ENCODE measurements at regions of chr2 and their contacts with region 1.

Region 1: DNA sequence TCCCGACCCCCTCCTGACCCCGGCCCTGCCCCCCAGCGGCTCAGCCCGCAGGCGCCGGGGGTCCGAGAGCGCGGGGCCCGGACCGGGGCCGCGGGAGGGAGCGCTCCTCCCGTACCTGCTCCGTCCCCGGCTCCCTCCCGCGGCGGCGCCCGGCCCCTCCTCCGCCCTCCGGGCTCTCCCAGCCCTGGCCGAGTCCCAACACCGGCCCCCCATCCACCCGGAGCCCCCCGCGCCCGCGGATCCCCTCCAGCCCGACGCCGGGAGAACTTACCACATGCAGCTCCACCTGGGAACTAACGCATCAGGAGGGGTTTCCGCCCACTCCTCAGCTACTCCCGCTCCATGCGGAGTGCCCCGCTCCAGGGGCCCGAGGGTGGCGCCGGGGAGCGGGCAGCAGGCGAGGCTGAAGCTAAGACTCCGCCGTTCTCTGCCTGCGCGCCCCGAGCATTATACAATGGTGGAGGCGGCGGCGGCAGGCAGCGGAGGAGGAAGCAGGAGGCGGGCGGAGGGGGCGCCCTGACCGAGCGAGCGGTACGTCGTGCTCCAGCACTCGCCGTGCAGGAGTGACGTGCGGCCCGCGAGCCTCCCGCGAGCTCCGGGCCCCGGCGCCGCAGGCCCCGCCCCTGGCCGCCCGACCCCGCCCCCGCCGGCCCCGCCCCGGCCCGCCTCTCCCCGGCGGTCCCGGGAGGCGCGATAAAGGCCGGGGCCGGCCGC is at the start of gene SERTAD2:
- DNase-seq: peak; percentile 72 to 95 (median 87)
- ATAC-seq: peak; percentile 82
- H3K4me3 ChIP-seq: peak within 1 kb of the TSS; percentile 84 to 85
- H3K4me3 Mint-ChIP-seq: peak within 1 kb of the TSS; percentile 94
- H3K27ac ChIP-seq: peak within 1 kb of the TSS; percentile 86 to 90
- H3K27ac Mint-ChIP-seq: peak within 1 kb of the TSS; percentile 97
- H3K4me1 ChIP-seq: peaks cover 63% of the 10 kb centered on the region
- H3K4me1 Mint-ChIP-seq: peaks cover 78% of the 10 kb centered on the region
- H3K27me3 ChIP-seq: no peaks in the 10 kb centered on the region
- H3K27me3 Mint-ChIP-seq: no peaks in the 10 kb centered on the region
- CTCF ChIP-seq: no peak
- total RNA-seq, gene SERTAD2: 47.5 to 48.8 TPM

Region 2: GRCh38 chr2:64488050-64488974 is 165.2 kb before region 1 on chr2:
- CTCF ChIA-PET with region 1: no interaction called
- POLR2A ChIA-PET with region 1: no interaction called
- intact Hi-C with region 1: no loop called
- DNase-seq: peak; percentile 56 to 87 (median 79)
- ATAC-seq: peak; percentile 82
- H3K4me3 ChIP-seq: no peak overlapping the region
- H3K4me3 Mint-ChIP-seq: no peak overlapping the region
- H3K27ac ChIP-seq: no peak overlapping the region
- H3K27ac Mint-ChIP-seq: no peak overlapping the region
- H3K4me1 ChIP-seq: no peaks in the 10 kb centered on the region
- H3K4me1 Mint-ChIP-seq: peaks cover 11% of the 10 kb centered on the region
- H3K27me3 ChIP-seq: no peaks in the 10 kb centered on the region
- H3K27me3 Mint-ChIP-seq: peaks cover 6% of the 10 kb centered on the region
- CTCF ChIP-seq: peak; percentile 97

Region 3: GRCh38 chr2:64514008-64514407 is 139.5 kb before region 1 on chr2:
- CTCF ChIA-PET with region 1: no interaction called
- POLR2A ChIA-PET with region 1: no interaction called
- intact Hi-C with region 1: no loop called
- DNase-seq: no peak
- ATAC-seq: no peak
- H3K4me3 ChIP-seq: no peak overlapping the region
- H3K4me3 Mint-ChIP-seq: no peak overlapping the region
- H3K27ac ChIP-seq: no peak overlapping the region
- H3K27ac Mint-ChIP-seq: no peak overlapping the region
- H3K4me1 ChIP-seq: no peaks in the 10 kb centered on the region
- H3K4me1 Mint-ChIP-seq: no peaks in the 10 kb centered on the region
- H3K27me3 ChIP-seq: no peaks in the 10 kb centered on the region
- H3K27me3 Mint-ChIP-seq: no peaks in the 10 kb centered on the region
- CTCF ChIP-seq: no peak

Region 4: DNA sequence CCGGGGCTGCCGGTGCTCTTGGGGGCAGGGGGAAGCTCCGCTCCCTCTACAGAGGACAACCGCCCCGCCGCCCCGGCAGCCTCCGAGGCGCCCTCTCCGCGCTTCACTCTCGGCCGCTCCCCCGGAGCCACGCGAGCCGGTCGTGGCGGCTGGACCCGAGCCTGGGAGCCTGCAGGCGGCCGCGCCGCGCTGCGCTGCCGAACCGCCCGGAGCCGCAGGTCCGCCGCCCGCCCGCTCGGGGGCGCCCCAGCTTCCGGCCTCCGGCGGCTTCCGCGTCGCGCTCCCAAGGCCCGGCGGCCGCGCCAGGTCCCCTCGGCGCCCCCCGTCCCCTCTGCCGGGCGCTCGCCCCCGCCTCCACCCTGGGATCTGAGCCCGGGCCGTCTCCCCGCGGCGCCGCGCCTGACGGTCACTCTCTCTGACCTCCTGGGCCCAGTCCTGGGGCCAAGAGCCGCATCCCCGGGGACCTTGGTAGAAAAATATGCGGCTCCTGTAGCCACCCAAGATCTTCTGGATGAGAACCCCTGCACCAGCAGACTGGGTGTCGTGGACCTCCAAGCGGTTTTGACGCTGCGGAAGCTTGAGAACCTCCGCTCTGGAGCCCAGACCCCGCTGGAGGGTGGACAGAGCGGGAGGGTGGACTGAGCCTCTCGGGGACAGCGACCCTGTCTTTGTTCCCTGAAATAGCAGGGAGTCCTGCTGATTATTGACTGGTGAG is 44.1 kb before region 1 on chr2:
- CTCF ChIA-PET with region 1: interaction called, 39 read pairs
- POLR2A ChIA-PET with region 1: interaction called, 31 read pairs
- intact Hi-C with region 1: loop called in 1 of 2 experiments (anchors 2 kb)
- DNase-seq: peak; percentile 37 to 85 (median 66)
- ATAC-seq: peak; percentile 65
- H3K4me3 ChIP-seq: peak overlapping the region; percentile 56 to 63
- H3K4me3 Mint-ChIP-seq: peak overlapping the region; percentile 79
- H3K27ac ChIP-seq: peak overlapping the region in 1 of 2 experiments; percentile 49
- H3K27ac Mint-ChIP-seq: peak overlapping the region; percentile 66
- H3K4me1 ChIP-seq: peaks cover 26% of the 10 kb centered on the region
- H3K4me1 Mint-ChIP-seq: peaks cover 29% of the 10 kb centered on the region
- H3K27me3 ChIP-seq: no peaks in the 10 kb centered on the region
- H3K27me3 Mint-ChIP-seq: no peaks in the 10 kb centered on the region
- CTCF ChIP-seq: peak; percentile 23

Region 5: GRCh38 chr2:64730551-64731262 is 77.2 kb after region 1 on chr2:
- CTCF ChIA-PET with region 1: interaction called, 18 read pairs
- POLR2A ChIA-PET with region 1: interaction called, 47 read pairs
- intact Hi-C with region 1: loop called (anchors 2 to 5 kb)
- DNase-seq: peak in 8 of 9 experiments; percentile 29 to 83 (median 58)
- ATAC-seq: peak; percentile 75
- H3K4me3 ChIP-seq: peak overlapping the region; percentile 32 to 51
- H3K4me3 Mint-ChIP-seq: peak overlapping the region; percentile 87
- H3K27ac ChIP-seq: peak overlapping the region; percentile 69 to 78
- H3K27ac Mint-ChIP-seq: peak overlapping the region; percentile 99
- H3K4me1 ChIP-seq: peaks cover 43% of the 10 kb centered on the region
- H3K4me1 Mint-ChIP-seq: peaks cover 61% of the 10 kb centered on the region
- H3K27me3 ChIP-seq: no peaks in the 10 kb centered on the region
- H3K27me3 Mint-ChIP-seq: no peaks in the 10 kb centered on the region
- CTCF ChIP-seq: no peak

Region 6: DNA sequence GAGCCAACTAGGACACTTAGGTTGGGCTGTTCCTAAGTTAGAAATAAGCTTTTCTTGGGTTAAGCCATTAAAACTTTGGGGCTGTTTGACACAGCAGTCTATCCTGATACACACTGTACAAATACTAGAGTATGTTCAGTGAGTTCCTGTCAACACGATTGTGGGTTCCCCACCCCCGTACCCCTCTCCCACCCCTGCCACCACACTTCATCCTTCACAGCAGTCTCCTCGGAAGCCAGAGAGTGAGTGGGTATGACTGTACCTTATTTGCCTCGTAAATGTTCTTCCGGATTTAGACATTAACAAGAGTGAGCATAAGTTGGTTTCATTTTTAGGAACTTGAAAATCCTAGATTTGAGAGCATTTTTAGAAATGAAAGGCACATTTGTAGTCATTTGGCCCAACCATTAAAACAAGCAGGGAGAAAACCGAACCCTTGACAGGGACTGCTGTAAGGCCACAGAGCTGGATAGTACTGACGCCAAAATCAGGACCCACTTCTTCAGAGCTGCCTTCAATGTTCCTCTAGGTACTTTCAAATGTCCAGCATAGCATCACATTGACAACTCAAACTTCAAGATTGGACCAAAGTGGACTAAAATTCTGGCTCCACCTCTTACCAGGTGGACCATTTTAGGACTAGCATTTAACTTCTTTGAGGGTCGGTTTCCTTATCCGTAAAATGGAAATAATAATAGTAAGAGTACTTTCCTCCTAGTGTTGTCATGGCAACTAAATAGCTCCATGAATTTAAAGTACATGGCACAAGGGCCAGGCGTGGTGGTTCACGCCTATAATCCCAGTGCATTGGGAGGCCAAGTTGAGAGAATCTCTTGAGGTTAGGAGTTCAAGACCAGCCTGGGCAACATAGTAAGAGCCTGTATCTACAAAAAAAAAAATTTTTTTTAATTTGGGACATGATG is 166.5 kb after region 1 on chr2:
- CTCF ChIA-PET with region 1: interaction called, 5 read pairs
- POLR2A ChIA-PET with region 1: interaction called, 25 read pairs
- intact Hi-C with region 1: no loop called
- DNase-seq: peak in 8 of 9 experiments; percentile 39 to 82 (median 56)
- ATAC-seq: peak; percentile 98
- H3K4me3 ChIP-seq: peak overlapping the region; percentile 12 to 36
- H3K4me3 Mint-ChIP-seq: peak overlapping the region; percentile 73
- H3K27ac ChIP-seq: peak overlapping the region; percentile 60 to 72
- H3K27ac Mint-ChIP-seq: peak overlapping the region; percentile 93
- H3K4me1 ChIP-seq: peaks cover 28% of the 10 kb centered on the region
- H3K4me1 Mint-ChIP-seq: peaks cover 40% of the 10 kb centered on the region
- H3K27me3 ChIP-seq: no peaks in the 10 kb centered on the region
- H3K27me3 Mint-ChIP-seq: no peaks in the 10 kb centered on the region
- CTCF ChIP-seq: no peak

Region 7: GRCh38 chr2:65056215-65057053 is 402.9 kb after region 1 on chr2 and contains the start of gene CEP68:
- CTCF ChIA-PET with region 1: no interaction called
- POLR2A ChIA-PET with region 1: interaction called, 3 read pairs
- intact Hi-C with region 1: loop called in 1 of 2 experiments (anchors 5 kb)
- DNase-seq: peak; percentile 89 to 98 (median 96)
- ATAC-seq: peak; percentile 89
- H3K4me3 ChIP-seq: peak within 1 kb of the TSS; percentile 85 to 86
- H3K4me3 Mint-ChIP-seq: peak within 1 kb of the TSS; percentile 99
- H3K27ac ChIP-seq: peak within 1 kb of the TSS; percentile 62 to 72
- H3K27ac Mint-ChIP-seq: peak within 1 kb of the TSS; percentile 97
- H3K4me1 ChIP-seq: peaks cover 70% of the 10 kb centered on the region
- H3K4me1 Mint-ChIP-seq: peaks cover 73% of the 10 kb centered on the region
- H3K27me3 ChIP-seq: no peaks in the 10 kb centered on the region
- H3K27me3 Mint-ChIP-seq: no peaks in the 10 kb centered on the region
- CTCF ChIP-seq: no peak
- total RNA-seq, gene CEP68: 19.9 to 20.5 TPM

Measured in CD8-positive, alpha-beta T cell (primary cell).